Activated T-helper 2 cell treated with anti-CD3 and anti-CD28 coated beads, Interferon-gamma antibody, Interleukin-2, Interleukin-4, amounts not matched to agents 10 μg/mL and 5 μg/mL and 100 μg/mL, durations not matched to agents 14 hours and 24 hours and 36 hours (primary cell): ENCODE measurements at regions of chr2 and their contacts with region 1.

Region 1: GRCh38 chr2:197869501-197870111 is 65.2 kb downstream of the PLCL1 start:
- DNase-seq: peak; percentile 38
- H3K4me3 Mint-ChIP-seq: peak overlapping the region; percentile 54
- H3K27ac Mint-ChIP-seq: peak overlapping the region; percentile 84
- H3K4me1 Mint-ChIP-seq: peaks cover 51% of the 10 kb centered on the region
- H3K27me3 Mint-ChIP-seq: no peaks in the 10 kb centered on the region

Region 2: DNA sequence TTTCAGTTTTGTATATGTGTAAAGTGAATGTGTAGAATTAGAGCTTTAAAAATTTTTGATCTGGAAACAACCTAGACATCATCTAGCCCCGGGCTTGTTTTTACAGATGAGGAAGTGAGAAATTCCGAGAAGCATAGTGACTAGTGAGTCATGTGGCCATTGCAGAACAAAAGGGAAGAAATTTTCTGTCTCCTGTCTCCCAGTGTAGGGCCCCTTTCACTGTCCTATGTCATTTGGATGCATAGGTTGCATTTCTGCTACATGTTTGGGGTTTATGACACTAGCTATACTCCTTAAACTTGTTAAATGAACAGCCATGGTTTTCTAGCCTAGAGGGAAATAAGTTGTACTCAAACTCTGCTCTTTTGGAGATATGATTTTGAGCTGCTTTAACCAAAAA is 19.4 kb after region 1 on chr2:
- intact Hi-C with region 1: loop called (anchors 1 kb)
- DNase-seq: no peak
- H3K4me3 Mint-ChIP-seq: no peak overlapping the region
- H3K27ac Mint-ChIP-seq: peak overlapping the region; percentile 77
- H3K4me1 Mint-ChIP-seq: peaks cover 37% of the 10 kb centered on the region
- H3K27me3 Mint-ChIP-seq: no peaks in the 10 kb centered on the region

Region 3: DNA sequence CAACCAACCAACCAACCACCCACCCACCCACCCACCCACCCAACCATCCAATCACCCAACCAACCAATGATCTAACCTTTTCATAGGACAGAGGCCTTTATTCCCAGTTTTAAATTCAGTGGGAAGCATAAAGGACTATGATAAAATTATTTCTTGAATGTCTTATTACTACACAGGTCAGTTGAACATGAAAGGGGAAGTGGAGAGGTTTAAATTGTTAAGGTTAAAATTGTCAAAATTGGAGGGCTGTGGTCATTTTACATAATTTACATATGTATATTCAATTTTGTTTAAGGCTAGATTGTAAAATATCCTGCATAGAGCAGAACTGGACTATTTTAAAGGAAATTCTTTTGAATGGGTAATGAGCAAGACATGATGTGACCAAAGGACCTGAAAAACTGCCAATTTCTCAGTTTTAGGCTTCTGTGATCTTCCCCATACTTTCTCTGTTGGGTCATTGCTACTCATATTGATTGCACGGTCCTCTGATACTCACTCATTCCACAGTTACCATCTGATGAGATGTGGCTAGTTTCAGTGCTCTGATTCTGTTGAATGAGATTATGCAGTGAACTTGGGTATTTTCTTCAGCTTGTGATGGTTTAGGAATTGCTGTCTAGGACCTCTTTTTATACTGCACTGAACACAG is 62.2 kb after region 1 on chr2:
- intact Hi-C with region 1: loop called (anchors 1 kb)
- DNase-seq: no peak
- H3K4me3 Mint-ChIP-seq: no peak overlapping the region
- H3K27ac Mint-ChIP-seq: no peak overlapping the region
- H3K4me1 Mint-ChIP-seq: peaks cover 39% of the 10 kb centered on the region
- H3K27me3 Mint-ChIP-seq: peaks cover 6% of the 10 kb centered on the region

Region 4: DNA sequence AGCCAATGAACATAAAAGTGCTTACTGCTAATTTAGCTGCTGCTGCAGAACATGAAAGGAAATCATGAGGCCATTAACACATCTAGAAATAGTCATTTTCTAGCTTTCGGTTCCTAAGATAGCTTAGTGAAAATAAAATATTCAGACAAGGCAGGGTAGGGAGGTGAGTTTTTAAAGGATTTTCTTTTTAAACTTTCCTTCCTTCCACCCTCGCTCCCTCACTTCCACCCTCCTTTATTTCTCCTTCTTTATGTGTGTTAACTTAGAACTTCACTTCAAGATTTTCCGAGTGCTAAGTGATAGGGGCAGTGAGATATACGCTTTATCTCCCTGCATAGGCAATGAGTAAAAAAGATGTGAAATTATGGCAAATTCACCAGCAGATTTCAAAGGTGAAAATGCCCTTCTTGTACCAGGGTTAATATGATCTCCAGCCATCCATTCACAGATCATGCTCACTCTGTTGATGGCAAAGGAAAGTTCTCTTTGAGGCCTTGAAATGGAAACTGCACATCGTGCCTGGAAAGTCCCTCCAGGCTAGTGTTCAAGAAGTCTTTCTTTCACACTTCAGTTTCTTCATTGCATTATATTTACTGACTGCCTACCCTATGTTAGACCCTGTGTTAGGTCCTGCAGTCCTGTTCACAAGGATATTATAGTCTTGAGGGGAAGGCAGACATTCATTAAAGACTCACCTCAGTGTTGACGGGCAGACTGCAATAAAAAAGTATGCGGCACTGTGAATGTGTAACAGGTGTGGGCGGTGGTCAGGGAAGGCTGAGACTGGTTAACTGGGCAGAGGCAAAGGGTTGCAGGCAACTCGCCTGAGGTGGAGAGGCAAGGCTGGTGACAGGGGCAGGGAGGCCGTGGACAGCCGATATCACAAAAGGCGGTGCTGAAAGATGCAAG is 135.6 kb after region 1 on chr2:
- intact Hi-C with region 1: loop called (anchors 1 kb)
- DNase-seq: no peak
- H3K4me3 Mint-ChIP-seq: peak overlapping the region; percentile 20
- H3K27ac Mint-ChIP-seq: peak overlapping the region; percentile 79
- H3K4me1 Mint-ChIP-seq: peaks cover 49% of the 10 kb centered on the region
- H3K27me3 Mint-ChIP-seq: no peaks in the 10 kb centered on the region